Caco-2 (cell line): ENCODE measurements at regions of chr10 and their contacts with region 1.

Region 1: DNA sequence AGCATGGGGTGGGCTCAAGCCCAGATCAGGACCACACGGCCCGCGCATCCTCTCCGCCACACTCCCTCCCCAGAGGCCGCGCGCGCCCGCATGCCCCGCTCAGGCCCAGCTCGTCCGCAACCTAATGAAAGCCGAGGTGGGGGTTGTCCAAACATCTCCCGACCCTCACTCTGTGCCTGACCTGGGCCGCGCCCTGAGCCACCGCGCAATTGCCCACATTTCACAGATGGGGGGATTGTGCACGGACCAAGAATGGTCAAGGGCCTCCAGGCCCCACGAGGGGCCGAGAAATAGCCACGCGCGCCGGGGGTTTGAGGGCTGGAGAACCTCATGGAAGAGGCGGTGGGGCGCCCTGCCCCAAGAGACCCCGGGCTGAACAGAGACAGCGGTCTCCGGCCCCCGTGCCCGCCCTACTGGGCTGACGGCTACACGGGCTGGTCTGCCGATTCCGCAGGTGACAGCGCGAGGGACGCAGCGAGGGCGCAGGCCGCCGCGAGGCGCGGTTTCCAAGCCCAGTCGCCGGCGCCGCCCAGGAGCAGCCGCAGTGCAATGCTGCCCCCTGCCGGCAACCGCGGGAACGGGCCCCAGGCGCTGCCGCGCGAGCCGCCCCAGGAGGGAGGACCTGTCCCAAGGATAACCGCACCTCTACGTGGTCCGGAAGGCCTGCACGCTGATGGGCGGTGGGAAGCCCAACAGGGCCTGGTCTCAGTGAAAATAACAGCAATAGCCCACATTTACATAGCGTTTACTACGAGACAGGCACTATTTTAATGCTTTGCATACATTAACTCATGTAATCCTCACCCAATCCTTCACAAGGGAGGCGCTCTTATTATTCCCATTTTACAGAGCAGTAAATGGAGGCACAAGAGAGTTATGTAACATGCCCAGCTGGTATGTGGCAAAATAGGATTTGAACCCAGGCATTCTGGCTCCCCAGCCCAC is 10.5 kb upstream of the GRID1 start:
- DNase-seq: peak; percentile 71 to 94
- H3K4me3 ChIP-seq: no peak overlapping the region
- H3K4me3 Mint-ChIP-seq: no peak overlapping the region
- H3K27ac Mint-ChIP-seq: no peak overlapping the region
- H3K4me1 ChIP-seq: peaks cover 4% of the 10 kb centered on the region; the same call in 1 of the 2 replicates
- H3K4me1 Mint-ChIP-seq: no peaks in the 10 kb centered on the region
- H3K27me3 ChIP-seq: no peaks in the 10 kb centered on the region
- H3K27me3 Mint-ChIP-seq: peaks cover 13% of the 10 kb centered on the region
- CTCF ChIP-seq: peak; percentile 81 to 98

Region 2: GRCh38 chr10:85548034-85548433 is 829.1 kb before region 1 on chr10:
- CTCF ChIA-PET with region 1: no interaction called
- POLR2A ChIA-PET with region 1: no interaction called
- intact Hi-C with region 1: loop called (anchors 1 kb)
- DNase-seq: peak; percentile 40 to 50
- H3K4me3 ChIP-seq: no peak overlapping the region
- H3K4me3 Mint-ChIP-seq: no peak overlapping the region
- H3K27ac Mint-ChIP-seq: no peak overlapping the region
- H3K4me1 ChIP-seq: no peaks in the 10 kb centered on the region
- H3K4me1 Mint-ChIP-seq: peaks cover 12% of the 10 kb centered on the region
- H3K27me3 ChIP-seq: no peaks in the 10 kb centered on the region
- H3K27me3 Mint-ChIP-seq: no peaks in the 10 kb centered on the region
- CTCF ChIP-seq: peak; percentile 37 to 52

Region 3: GRCh38 chr10:85995791-85996190 is 381.3 kb before region 1 on chr10:
- CTCF ChIA-PET with region 1: no interaction called
- POLR2A ChIA-PET with region 1: no interaction called
- intact Hi-C with region 1: loop called (anchors 1 kb)
- DNase-seq: peak in 1 of 2 experiments; percentile 22
- H3K4me3 ChIP-seq: no peak overlapping the region
- H3K4me3 Mint-ChIP-seq: no peak overlapping the region
- H3K27ac Mint-ChIP-seq: no peak overlapping the region
- H3K4me1 ChIP-seq: no peaks in the 10 kb centered on the region
- H3K4me1 Mint-ChIP-seq: peaks cover 6% of the 10 kb centered on the region
- H3K27me3 ChIP-seq: no peaks in the 10 kb centered on the region
- H3K27me3 Mint-ChIP-seq: peaks cover 11% of the 10 kb centered on the region
- CTCF ChIP-seq: peak in 1 of 2 experiments; percentile 41

Region 4: DNA sequence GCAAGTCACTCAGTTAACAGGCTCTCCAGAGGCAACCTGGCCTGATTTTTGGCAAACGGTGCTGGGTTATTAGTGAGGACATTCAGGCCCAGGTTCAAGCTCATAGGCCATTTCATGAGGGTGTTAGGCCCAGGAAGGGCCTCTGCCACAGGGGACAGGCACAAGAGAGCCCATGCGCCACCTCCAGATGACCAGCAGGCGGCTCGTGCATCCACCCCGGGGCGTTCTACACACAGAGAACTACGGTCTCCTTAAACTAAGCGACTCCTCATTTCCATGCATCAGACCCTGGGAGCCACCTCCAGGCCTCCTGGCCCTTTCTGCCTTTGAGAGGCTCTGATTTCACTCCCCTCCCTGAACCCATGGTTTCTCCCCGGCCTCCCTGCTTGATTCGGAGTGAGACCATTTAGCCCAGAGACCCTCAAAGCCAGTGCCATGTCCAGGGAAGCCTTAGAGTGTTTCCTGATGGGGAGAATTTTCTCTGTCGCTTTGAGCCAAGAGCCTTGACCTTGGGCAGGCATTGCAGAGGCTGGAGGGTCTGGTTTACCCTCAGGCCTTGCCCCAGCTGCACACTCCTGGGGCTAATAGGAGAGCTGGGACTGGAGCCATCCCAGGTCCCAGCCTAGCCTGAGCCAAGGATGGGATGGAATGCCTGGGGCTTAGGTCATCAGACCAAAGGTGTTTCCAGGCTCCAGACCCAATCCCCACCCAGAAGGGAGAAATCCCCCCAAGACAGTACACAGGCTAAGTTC is 198.5 kb before region 1 on chr10:
- CTCF ChIA-PET with region 1: no interaction called
- POLR2A ChIA-PET with region 1: no interaction called
- intact Hi-C with region 1: loop called (anchors 1 kb)
- DNase-seq: peak; percentile 46 to 52
- H3K4me3 ChIP-seq: no peak overlapping the region
- H3K4me3 Mint-ChIP-seq: no peak overlapping the region
- H3K27ac Mint-ChIP-seq: no peak overlapping the region
- H3K4me1 ChIP-seq: no peaks in the 10 kb centered on the region
- H3K4me1 Mint-ChIP-seq: no peaks in the 10 kb centered on the region
- H3K27me3 ChIP-seq: no peaks in the 10 kb centered on the region; the same call in 1 of the 2 replicates
- H3K27me3 Mint-ChIP-seq: peaks cover 6% of the 10 kb centered on the region
- CTCF ChIP-seq: peak; percentile 61 to 63

Region 5: DNA sequence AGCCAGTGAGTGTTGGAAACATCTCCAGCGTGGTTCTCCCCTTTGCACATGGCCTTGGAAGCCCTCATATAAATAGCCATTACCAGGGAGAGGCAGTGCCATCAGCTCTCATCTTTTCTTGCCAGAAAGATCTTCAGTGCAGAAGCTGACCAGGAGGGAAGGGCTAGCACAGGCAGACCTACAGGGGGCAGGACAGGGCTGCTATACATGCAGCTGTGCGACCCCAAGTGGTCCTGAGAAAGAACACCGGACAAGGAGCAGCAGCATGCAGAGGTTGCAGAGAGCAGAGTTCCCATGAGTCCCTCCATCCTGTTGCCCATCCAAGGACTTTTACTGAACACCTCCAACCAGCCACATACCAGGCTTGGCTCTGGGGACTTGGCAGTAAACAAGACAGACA is 27.6 kb before region 1 on chr10:
- CTCF ChIA-PET with region 1: interaction called, 10 read pairs
- POLR2A ChIA-PET with region 1: no interaction called
- intact Hi-C with region 1: loop called (anchors 1 kb)
- DNase-seq: peak; percentile 65 to 68
- H3K4me3 ChIP-seq: no peak overlapping the region
- H3K4me3 Mint-ChIP-seq: no peak overlapping the region
- H3K27ac Mint-ChIP-seq: no peak overlapping the region
- H3K4me1 ChIP-seq: peaks cover 27% of the 10 kb centered on the region
- H3K4me1 Mint-ChIP-seq: peaks cover 14% of the 10 kb centered on the region
- H3K27me3 ChIP-seq: no peaks in the 10 kb centered on the region
- H3K27me3 Mint-ChIP-seq: no peaks in the 10 kb centered on the region
- CTCF ChIP-seq: peak; percentile 81 to 99